ENCODE measurements at regions of chr19 and their contacts with region 1.

Region 1: GRCh38 chr19:48993175-48994034 is at the starts of genes GYS1 and RUVBL2:
- DNase-seq: peak; percentile 100
- ATAC-seq: peak; percentile 95
- H3K4me3 Mint-ChIP-seq: peak within 1 kb of the TSS; percentile 95
- H3K27ac Mint-ChIP-seq: peak within 1 kb of the TSS; percentile 98
- H3K4me1 Mint-ChIP-seq: peaks cover 42% of the 10 kb centered on the region
- H3K27me3 Mint-ChIP-seq: no peaks in the 10 kb centered on the region
- CTCF ChIP-seq: peak; percentile 97
- total RNA-seq, gene GYS1: 58.1 to 58.7 TPM
- total RNA-seq, gene RUVBL2: 175 to 176 TPM

Region 2: DNA sequence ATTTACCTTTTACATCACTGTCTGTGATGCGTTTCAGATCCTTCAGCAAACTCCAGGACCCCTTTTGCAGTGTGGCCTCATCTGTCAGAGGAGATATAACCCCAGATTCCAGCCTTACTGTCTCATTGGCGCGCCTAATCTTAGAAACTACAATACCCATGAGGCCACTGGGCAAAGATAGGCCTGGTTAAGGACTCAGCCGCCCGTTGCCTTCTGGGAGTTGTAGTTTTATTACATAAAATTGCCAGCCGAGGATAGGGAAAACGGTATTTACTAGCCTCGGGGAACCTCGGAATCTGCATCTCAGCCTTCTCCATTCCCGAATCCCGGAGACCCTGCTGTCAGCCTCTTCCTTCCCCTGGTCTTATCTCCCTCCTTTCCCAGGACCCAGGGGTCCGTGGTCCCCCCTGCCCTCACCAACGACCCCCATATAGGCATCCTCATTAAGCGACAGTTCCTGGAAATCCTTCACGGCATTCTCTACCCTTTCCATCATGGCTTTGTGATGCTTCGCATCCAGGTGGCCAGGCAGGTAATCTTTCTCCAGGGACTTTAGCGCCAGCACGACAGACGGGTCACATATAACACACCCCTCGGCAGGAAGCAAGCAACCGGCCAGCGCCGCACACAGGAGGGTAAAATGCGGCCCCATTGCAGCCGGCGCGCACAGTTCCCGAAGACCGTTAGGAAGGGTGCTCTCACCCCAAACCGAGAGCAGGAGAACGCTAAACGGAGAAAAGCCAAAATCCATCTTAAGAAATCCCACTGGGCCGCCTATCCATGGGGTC is 248.0 kb before region 1 on chr19:
- CTCF ChIA-PET with region 1: no interaction called
- POLR2A ChIA-PET with region 1: no interaction called
- intact Hi-C with region 1: no loop called
- DNase-seq: peak; percentile 75
- ATAC-seq: peak; percentile 70
- H3K4me3 Mint-ChIP-seq: no peak overlapping the region
- H3K27ac Mint-ChIP-seq: no peak overlapping the region
- H3K4me1 Mint-ChIP-seq: peaks cover 12% of the 10 kb centered on the region
- H3K27me3 Mint-ChIP-seq: peaks cover 14% of the 10 kb centered on the region
- CTCF ChIP-seq: no peak

Region 3: DNA sequence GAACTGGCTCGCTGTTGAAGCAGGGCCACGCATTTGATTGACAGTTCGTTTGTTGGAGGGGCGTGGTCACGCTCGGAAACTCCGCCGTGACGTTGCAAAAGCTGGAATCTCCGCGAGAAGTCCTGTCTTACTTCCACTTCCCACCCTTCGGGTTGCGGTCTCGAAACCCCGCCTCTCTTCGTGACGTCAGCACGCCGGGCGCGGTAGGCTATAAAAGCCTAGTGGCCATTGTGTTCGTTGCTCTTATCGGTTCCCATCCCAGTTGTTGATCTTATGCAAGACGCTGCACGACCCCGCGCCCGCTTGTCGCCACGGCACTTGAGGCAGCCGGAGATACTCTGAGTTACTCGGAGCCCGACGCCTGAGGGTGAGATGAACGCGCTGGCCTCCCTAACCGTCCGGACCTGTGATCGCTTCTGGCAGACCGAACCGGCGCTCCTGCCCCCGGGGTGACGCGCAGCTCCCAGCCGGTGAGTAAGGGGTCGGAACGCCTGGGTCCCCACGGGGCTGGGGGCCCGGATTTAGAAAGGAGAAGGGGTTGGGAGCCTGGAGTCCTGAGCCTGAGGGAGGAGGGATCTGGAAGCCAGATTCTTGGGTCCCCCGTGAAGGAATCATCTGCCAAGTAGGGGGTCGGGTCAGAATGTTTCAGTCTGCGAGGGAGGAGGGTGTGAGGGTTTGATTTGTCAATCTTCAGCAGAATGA is 121.1 kb before region 1 on chr19 and contains the start of gene PPP1R15A:
- CTCF ChIA-PET with region 1: interaction called, 13 read pairs
- POLR2A ChIA-PET with region 1: interaction called, 4 read pairs
- intact Hi-C with region 1: no loop called
- DNase-seq: peak; percentile 99
- ATAC-seq: peak; percentile 48
- H3K4me3 Mint-ChIP-seq: peak within 1 kb of the TSS; percentile 99
- H3K27ac Mint-ChIP-seq: peak within 1 kb of the TSS; percentile 100
- H3K4me1 Mint-ChIP-seq: peaks cover 40% of the 10 kb centered on the region
- H3K27me3 Mint-ChIP-seq: peaks cover 2% of the 10 kb centered on the region
- CTCF ChIP-seq: no peak
- total RNA-seq, gene PPP1R15A: 77.8 to 81.2 TPM

Region 4: DNA sequence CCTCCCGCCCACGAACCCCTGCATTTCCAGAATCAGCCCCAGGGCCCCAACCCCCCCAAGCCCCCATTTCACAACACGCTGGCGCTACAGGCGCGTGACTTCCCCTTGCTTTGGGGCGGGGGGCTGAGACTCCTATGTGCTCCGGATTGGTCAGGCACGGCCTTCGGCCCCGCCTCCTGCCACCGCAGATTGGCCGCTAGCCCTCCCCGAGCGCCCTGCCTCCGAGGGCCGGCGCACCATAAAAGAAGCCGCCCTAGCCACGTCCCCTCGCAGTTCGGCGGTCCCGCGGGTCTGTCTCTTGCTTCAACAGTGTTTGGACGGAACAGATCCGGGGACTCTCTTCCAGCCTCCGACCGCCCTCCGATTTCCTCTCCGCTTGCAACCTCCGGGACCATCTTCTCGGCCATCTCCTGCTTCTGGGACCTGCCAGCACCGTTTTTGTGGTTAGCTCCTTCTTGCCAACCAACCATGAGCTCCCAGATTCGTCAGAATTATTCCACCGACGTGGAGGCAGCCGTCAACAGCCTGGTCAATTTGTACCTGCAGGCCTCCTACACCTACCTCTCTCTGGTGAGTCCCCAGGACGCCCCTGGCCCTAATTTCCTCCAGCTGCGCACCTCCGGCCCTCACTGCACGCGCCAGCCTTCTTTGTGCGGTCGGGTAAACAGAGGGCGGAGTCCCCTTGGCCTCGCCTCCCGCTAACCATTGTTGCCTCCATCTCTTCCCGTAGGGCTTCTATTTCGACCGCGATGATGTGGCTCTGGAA is 28.2 kb before region 1 on chr19 and contains the start of gene FTL:
- CTCF ChIA-PET with region 1: interaction called, 17 read pairs
- POLR2A ChIA-PET with region 1: interaction called, 18 read pairs
- intact Hi-C with region 1: no loop called
- DNase-seq: peak; percentile 96
- ATAC-seq: peak; percentile 68
- H3K4me3 Mint-ChIP-seq: peak within 1 kb of the TSS; percentile 98
- H3K27ac Mint-ChIP-seq: peak within 1 kb of the TSS; percentile 100
- H3K4me1 Mint-ChIP-seq: peaks cover 51% of the 10 kb centered on the region
- H3K27me3 Mint-ChIP-seq: no peaks in the 10 kb centered on the region
- CTCF ChIP-seq: no peak
- total RNA-seq, gene FTL: 1,296 to 1,324 TPM

Region 5: DNA sequence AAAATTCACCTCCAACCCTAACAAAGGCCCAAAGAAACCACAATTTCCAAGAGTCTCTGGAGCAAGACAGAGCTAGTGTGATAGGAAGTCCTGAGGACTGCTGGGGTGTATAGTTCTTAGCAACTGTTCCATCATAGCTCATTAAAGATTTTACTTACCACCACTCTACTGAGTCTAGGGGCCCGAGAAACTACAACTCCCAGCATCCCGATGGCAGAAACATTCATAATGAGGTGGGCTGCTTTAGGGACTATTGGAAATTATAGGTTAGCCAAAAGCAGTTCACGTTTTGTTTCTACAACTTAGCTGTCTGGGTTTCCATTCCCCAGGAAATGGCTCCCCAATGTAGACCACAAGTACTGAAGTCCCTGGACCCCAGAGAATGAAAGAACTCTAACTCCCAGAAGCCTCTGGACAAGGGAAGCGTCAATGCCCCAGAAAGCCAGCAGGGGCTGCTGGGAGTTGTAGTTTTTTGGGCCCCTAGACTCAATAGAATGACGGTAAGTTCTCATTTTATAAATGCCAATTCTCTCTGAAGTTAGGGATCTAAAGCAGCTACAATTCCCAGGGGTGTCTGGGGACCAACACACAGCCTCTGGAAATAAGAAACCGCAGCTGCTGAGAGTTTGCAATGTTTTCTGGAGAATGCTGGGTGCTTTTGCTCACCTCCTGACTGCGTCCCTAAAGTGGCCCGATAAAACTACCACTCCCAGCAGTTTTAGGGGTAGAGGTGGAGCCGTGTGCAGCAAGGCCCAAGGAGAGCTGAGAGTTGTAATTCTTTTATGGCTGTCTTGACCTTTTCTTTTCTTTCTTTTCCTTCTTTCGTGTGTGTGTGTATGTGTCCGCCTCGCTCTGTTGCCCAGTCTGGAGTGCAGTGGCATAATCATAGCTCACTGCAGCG is 17.2 kb before region 1 on chr19:
- CTCF ChIA-PET with region 1: interaction called, 101 read pairs
- POLR2A ChIA-PET with region 1: interaction called, 8 read pairs
- intact Hi-C with region 1: no loop called
- DNase-seq: peak; percentile 78
- ATAC-seq: peak; percentile 62
- H3K4me3 Mint-ChIP-seq: no peak overlapping the region
- H3K27ac Mint-ChIP-seq: peak overlapping the region; percentile 46
- H3K4me1 Mint-ChIP-seq: peaks cover 17% of the 10 kb centered on the region
- H3K27me3 Mint-ChIP-seq: no peaks in the 10 kb centered on the region
- CTCF ChIP-seq: peak; percentile 26

Region 6: GRCh38 chr19:49017666-49018351 is 24.4 kb after region 1 on chr19:
- CTCF ChIA-PET with region 1: interaction called, 17 read pairs
- POLR2A ChIA-PET with region 1: interaction called, 7 read pairs
- intact Hi-C with region 1: no loop called
- DNase-seq: peak; percentile 73
- ATAC-seq: peak; percentile 77
- H3K4me3 Mint-ChIP-seq: peak overlapping the region; percentile 55
- H3K27ac Mint-ChIP-seq: no peak overlapping the region
- H3K4me1 Mint-ChIP-seq: peaks cover 30% of the 10 kb centered on the region
- H3K27me3 Mint-ChIP-seq: peaks cover 9% of the 10 kb centered on the region
- CTCF ChIP-seq: peak; percentile 84

Region 7: GRCh38 chr19:49340069-49340864 is 346.9 kb after region 1 on chr19:
- CTCF ChIA-PET with region 1: no interaction called
- POLR2A ChIA-PET with region 1: no interaction called
- intact Hi-C with region 1: no loop called
- DNase-seq: peak; percentile 21
- ATAC-seq: no peak
- H3K4me3 Mint-ChIP-seq: no peak overlapping the region
- H3K27ac Mint-ChIP-seq: peak overlapping the region; percentile 56
- H3K4me1 Mint-ChIP-seq: peaks cover 42% of the 10 kb centered on the region
- H3K27me3 Mint-ChIP-seq: no peaks in the 10 kb centered on the region
- CTCF ChIP-seq: no peak